Heart left ventricle (tissue), 16 donors: ENCODE measurements at regions of chr6 and their contacts with region 1.

Region 1: GRCh38 chr6:165573671-165574070 is 89.4 kb downstream of the PDE10A start:
- DNase-seq: peak; percentile 68 to 88 (median 79)
- ATAC-seq: peak; percentile 88 to 98 (median 95)
- H3K4me3 ChIP-seq: no peak overlapping the region
- H3K27ac ChIP-seq: peak overlapping the region in 11 of 12 donors; percentile 9 to 68 (median 44)
- H3K4me1 ChIP-seq: peaks cover 0 to 35% (median 21%) of the 10 kb centered on the region in 12 donors
- H3K27me3 ChIP-seq: no peaks in the 10 kb centered on the region
- CTCF ChIP-seq: peak in 1 of 12 donors; percentile 23
- POLR2A ChIP-seq: no peak

Region 2: DNA sequence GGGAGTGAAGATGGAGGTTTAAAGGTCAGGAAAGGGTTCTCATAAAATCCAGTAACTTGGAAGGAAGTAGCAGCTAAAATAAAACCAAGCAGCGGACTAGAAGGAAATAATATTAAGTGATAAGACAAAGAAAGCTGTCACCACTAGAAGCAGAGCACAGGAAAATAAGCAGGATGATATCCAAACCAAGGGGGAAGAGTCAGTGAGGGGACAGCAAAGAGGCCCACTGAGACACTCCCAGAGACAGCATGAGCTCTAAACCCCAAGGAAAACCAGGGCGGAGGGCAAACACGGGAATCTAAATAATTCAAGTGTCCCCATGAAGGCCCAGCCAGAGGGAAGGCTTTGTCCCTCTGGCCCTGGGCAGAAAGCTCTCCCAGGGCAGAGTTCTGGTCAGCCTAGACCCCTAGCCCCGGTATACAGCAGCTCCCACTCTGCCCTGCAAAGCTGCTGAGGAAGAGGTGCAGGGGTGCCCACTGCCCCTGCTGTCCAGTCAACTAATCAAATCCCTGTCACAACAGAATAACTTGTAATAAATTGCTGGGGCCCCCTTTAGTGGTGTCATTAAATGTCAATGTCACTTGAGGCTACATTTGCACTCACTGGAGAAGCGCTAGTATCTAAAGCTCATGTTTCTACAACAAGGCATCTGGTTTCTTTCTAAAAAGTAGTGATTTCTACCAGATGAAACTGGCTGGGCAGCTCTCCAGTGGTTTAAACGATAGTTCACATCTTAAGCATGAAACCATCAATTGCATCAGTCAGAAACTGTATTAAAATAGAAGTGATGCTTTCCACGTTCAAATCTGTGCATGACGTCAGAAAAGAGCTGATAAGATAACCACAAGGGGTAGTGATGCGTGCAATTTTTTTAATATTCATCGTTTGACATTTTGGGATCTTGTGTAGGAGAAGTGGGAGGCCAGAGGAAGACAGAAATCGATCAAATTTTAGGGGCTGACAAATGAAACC is 75.8 kb after region 1 on chr6:
- intact Hi-C with region 1: loop called in 2 of 10 experiments (anchors 5 to 10 kb)
- DNase-seq: peak in 3 of 5 donors; percentile 48 to 76 (median 52)
- ATAC-seq: peak; percentile 16 to 70 (median 54)
- H3K4me3 ChIP-seq: peak overlapping the region in 1 of 12 donors; percentile 0
- H3K27ac ChIP-seq: peak overlapping the region in 10 of 12 donors; percentile 13 to 80 (median 68)
- H3K4me1 ChIP-seq: peaks cover 0 to 49% (median 29%) of the 10 kb centered on the region in 12 donors
- H3K27me3 ChIP-seq: no peaks in the 10 kb centered on the region
- CTCF ChIP-seq: no peak
- POLR2A ChIP-seq: no peak

Region 3: DNA sequence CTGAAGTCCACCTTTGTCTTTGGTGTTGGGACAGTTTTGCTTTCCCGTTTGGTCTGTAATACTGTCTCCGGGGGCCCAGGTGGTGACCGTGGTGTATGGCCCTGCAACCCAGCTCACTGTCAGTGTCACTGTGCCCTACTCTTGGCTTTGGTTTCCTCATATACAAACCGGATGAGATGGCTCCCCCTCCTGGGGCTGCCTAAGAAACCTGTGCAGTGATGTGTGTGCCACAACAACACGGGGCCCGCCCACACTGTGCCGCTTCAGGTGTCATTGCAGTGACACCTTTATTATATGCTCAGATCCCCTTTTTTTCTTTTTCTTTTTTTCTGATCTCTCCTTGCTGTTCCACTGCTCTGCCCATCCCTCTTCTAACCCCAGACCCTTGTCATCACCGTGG is 938.9 kb after region 1 on chr6:
- intact Hi-C with region 1: no loop called
- DNase-seq: peak in 1 of 5 donors; percentile 15
- ATAC-seq: no peak
- H3K4me3 ChIP-seq: no peak overlapping the region
- H3K27ac ChIP-seq: no peak overlapping the region
- H3K4me1 ChIP-seq: peaks cover 0 to 7% (median 0%) of the 10 kb centered on the region in 12 donors
- H3K27me3 ChIP-seq: no peaks in the 10 kb centered on the region
- CTCF ChIP-seq: no peak
- POLR2A ChIP-seq: no peak